Heart right ventricle (tissue), 16 donors: ENCODE measurements at regions of chr14 and their contacts with region 1.

Region 1: DNA sequence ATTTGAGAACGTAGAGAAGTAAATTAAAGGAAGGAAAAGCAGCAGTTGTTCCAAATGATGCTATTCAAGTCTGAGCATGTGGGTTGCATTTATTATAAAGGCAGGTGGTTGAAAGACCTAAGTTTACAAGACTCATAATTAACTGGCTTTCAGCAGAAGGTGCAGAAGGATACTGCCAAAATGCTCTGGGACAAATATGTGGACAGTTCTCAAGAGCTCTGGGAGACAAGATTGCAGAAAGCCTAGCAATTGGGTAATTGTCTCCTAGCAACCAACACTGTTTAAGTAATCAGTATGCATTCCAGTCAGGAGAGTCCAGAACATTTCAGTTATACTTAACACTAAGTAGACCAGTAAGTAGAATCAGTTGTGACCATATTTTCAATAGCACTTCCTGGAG is 131.5 kb downstream of the GPR135 start:
- DNase-seq: peak in 1 of 2 donors; percentile 66
- ATAC-seq: peak; percentile 84 to 95 (median 92)
- H3K4me3 ChIP-seq: no peak overlapping the region
- H3K27ac ChIP-seq: peak overlapping the region; percentile 57 to 89 (median 86)
- H3K4me1 ChIP-seq: peaks cover 21 to 79% (median 71%) of the 10 kb centered on the region in 9 donors
- H3K27me3 ChIP-seq: no peaks in the 10 kb centered on the region
- CTCF ChIP-seq: no peak

Region 2: DNA sequence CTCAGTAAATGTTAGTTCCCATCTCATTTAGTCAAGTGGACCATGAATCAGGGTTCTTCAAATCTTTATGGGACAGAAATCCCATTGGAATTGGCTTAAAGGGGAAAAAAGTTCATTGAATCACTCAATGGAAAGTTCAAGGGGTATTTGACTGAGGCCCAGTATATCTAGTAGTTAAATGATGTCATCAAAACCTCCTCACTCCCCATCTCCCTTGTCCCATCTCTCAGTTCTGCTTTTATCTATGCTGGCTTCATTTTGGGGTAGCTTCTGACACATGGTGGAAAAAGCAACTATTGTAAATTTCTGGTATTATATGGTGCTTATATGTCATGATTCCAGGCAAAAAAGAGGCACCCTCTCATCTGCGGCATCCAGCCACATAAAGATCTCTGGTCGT is 93.3 kb before region 1 on chr14:
- intact Hi-C with region 1: no loop called
- DNase-seq: no peak
- ATAC-seq: no peak
- H3K4me3 ChIP-seq: no peak overlapping the region
- H3K27ac ChIP-seq: no peak overlapping the region
- H3K4me1 ChIP-seq: peaks cover 0 to 91% (median 47%) of the 10 kb centered on the region in 9 donors
- H3K27me3 ChIP-seq: no peaks in the 10 kb centered on the region
- CTCF ChIP-seq: no peak

Region 3: DNA sequence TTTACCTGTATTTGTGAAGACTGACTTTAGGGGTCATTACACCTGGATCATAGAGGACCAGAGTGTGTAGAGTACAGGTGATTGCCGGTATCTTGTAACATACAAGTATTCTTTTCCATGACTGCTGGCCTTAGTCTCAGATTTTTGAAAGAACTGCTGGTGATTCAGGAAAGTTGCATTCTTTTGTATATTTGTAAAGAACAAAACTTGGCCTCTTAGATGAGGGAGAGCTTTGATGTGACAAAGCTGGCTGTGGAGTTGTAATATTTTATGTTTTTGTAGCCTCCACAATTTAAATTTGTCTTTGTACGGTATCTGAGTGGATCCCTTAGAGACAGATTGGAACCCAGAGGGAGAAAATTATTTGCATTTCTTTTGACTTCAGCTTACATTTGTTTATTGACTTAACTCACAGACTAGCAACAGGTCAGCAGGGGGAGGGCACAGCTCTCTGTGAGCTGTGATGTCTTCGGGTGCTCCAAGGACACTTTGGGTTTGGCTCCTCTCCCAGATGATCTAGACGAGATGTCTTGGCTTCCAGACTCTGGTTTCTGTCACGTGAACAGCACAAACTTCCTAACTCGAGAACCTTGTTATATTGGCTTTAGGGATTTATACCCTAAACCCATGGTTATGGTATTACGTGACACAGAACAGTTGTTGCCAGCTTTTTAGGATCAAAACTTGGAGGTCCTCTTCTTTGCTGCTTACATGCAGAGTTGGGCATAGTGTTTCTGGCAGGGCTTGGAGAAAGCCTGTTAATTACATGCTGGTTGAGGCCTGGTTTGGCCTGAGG is 79.3 kb before region 1 on chr14:
- intact Hi-C with region 1: loop called in 2 of 10 experiments (anchors 2 to 5 kb)
- DNase-seq: peak; percentile 60 to 89
- ATAC-seq: peak; percentile 84 to 94 (median 90)
- H3K4me3 ChIP-seq: peak overlapping the region in 1 of 10 donors; percentile 11
- H3K27ac ChIP-seq: peak overlapping the region; percentile 74 to 94 (median 86)
- H3K4me1 ChIP-seq: peaks cover 10 to 85% (median 59%) of the 10 kb centered on the region in 9 donors
- H3K27me3 ChIP-seq: no peaks in the 10 kb centered on the region
- CTCF ChIP-seq: peak in 2 of 9 donors; percentile 14 to 30

Region 4: GRCh38 chr14:59360923-59361794 is 27.5 kb after region 1 on chr14:
- intact Hi-C with region 1: loop called in 1 of 10 experiments (anchors 2 kb)
- DNase-seq: peak; percentile 74 to 81
- ATAC-seq: peak; percentile 41 to 80 (median 72)
- H3K4me3 ChIP-seq: peak overlapping the region in 5 of 10 donors; percentile 0 to 38 (median 14)
- H3K27ac ChIP-seq: peak overlapping the region; percentile 21 to 91 (median 86)
- H3K4me1 ChIP-seq: peaks cover 13 to 87% (median 71%) of the 10 kb centered on the region in 9 donors
- H3K27me3 ChIP-seq: no peaks in the 10 kb centered on the region
- CTCF ChIP-seq: peak in 3 of 9 donors; percentile 27 to 31 (median 28)

Region 5: GRCh38 chr14:59377991-59378601 is 44.4 kb after region 1 on chr14:
- intact Hi-C with region 1: no loop called
- DNase-seq: peak in 1 of 2 donors; percentile 20
- ATAC-seq: peak; percentile 57 to 84 (median 74)
- H3K4me3 ChIP-seq: no peak overlapping the region
- H3K27ac ChIP-seq: peak overlapping the region in 8 of 10 donors; percentile 3 to 64 (median 54)
- H3K4me1 ChIP-seq: peaks cover 2 to 38% (median 18%) of the 10 kb centered on the region in 9 donors
- H3K27me3 ChIP-seq: no peaks in the 10 kb centered on the region
- CTCF ChIP-seq: no peak

Region 6: GRCh38 chr14:59407246-59408010 is 73.8 kb after region 1 on chr14:
- intact Hi-C with region 1: loop called in 1 of 10 experiments (anchors 5 kb)
- DNase-seq: no peak
- ATAC-seq: peak; percentile 65 to 88 (median 75)
- H3K4me3 ChIP-seq: no peak overlapping the region
- H3K27ac ChIP-seq: peak overlapping the region; percentile 6 to 84 (median 73)
- H3K4me1 ChIP-seq: peaks cover 3 to 34% (median 22%) of the 10 kb centered on the region in 9 donors
- H3K27me3 ChIP-seq: no peaks in the 10 kb centered on the region
- CTCF ChIP-seq: no peak

Region 7: GRCh38 chr14:59422069-59422881 is 88.6 kb after region 1 on chr14:
- intact Hi-C with region 1: loop called in 7 of 10 experiments (anchors 5 to 10 kb)
- DNase-seq: no peak
- ATAC-seq: peak in 3 of 8 donors; percentile 9 to 18 (median 13)
- H3K4me3 ChIP-seq: no peak overlapping the region
- H3K27ac ChIP-seq: peak overlapping the region in 6 of 10 donors; percentile 5 to 32 (median 28)
- H3K4me1 ChIP-seq: peaks cover 0 to 71% (median 42%) of the 10 kb centered on the region in 9 donors
- H3K27me3 ChIP-seq: no peaks in the 10 kb centered on the region
- CTCF ChIP-seq: peak in 6 of 9 donors; percentile 17 to 56 (median 38)

Region 8: GRCh38 chr14:59534361-59534987 is 200.8 kb after region 1 on chr14:
- intact Hi-C with region 1: no loop called
- DNase-seq: no peak
- ATAC-seq: peak in 1 of 8 donors; percentile 79
- H3K4me3 ChIP-seq: no peak overlapping the region
- H3K27ac ChIP-seq: no peak overlapping the region
- H3K4me1 ChIP-seq: no peaks in the 10 kb centered on the region
- H3K27me3 ChIP-seq: peaks cover 0 to 9% (median 0%) of the 10 kb centered on the region in 7 donors
- CTCF ChIP-seq: no peak